Naive thymus-derived CD4-positive, alpha-beta T cell (primary cell): ENCODE measurements at regions of chr5 and their contacts with region 1.

Region 1: DNA sequence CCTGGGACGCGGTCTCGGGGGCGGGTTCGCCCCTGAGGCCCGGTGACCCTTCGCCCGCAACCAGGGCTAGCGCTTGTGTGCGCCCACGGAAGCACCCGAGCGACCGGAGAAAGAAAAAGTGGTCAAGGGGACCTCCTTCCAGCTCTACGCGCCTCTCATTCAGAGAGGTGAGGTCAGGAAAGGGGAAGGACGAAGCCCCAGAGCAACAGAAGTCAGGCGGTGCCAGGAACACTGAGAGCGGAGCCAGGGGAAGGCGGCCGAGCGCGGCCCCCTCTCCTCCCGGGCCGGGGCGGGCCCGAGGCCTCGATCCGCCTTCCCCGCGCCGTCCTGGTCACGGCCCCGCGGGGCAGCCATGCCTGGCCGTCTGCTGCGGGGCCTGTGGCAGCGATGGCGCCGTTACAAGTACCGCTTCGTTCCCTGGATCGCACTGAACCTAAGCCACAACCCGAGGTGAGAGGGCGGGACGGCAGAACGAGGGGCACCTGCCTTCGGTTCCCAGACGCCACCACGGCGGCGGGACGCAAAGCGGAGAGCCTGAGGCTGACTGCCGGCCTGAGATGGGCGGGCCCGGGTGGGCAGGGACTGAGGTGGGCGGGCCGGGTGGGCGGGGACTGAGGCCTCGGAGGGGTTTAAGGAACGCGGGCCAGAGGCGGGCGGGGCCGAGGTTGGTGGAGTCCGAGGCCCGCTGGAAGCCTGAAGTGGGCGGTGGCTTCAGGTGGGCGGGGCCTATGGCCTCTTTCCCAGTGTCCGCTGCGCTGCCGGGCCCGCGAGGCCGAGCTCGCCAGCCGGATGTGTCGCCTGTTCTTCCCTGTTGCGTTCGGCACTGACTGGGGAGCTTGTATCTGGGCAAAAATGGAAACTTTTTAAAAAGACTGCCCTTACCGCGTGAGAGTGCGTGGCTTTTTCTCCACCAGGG is at the start of gene SETD9:
- DNase-seq: peak; percentile 67 to 94 (median 73)
- ATAC-seq: peak; percentile 90
- H3K4me3 ChIP-seq: peak within 1 kb of the TSS; percentile 75
- H3K4me3 Mint-ChIP-seq: peak within 1 kb of the TSS; percentile 88 to 100 (median 91)
- H3K27ac ChIP-seq: peak within 1 kb of the TSS; percentile 79
- H3K27ac Mint-ChIP-seq: peak within 1 kb of the TSS; percentile 81 to 97 (median 89)
- H3K4me1 ChIP-seq: no peaks in the 10 kb centered on the region
- H3K4me1 Mint-ChIP-seq: peaks cover 12 to 24% (median 21%) of the 10 kb centered on the region in 7 donors
- H3K27me3 ChIP-seq: no peaks in the 10 kb centered on the region
- H3K27me3 Mint-ChIP-seq: peaks cover 0 to 15% (median 0%) of the 10 kb centered on the region in 5 donors
- total RNA-seq, gene SETD9: 3.7 to 9.7 (median 6.6) TPM

Region 2: GRCh38 chr5:55307383-55308253 is 1601.9 kb before region 1 on chr5 and contains the starts of genes DHX29 and MTREX:
- CTCF ChIA-PET with region 1: no interaction called
- POLR2A ChIA-PET with region 1: no interaction called
- intact Hi-C with region 1: loop called in 1 of 2 experiments (anchors 1 kb)
- DNase-seq: peak; percentile 85 to 93 (median 91)
- ATAC-seq: peak; percentile 94
- H3K4me3 ChIP-seq: peak within 1 kb of the TSS; percentile 97
- H3K4me3 Mint-ChIP-seq: no peak within 1 kb of the TSS
- H3K27ac ChIP-seq: peak within 1 kb of the TSS; percentile 89
- H3K27ac Mint-ChIP-seq: no peak within 1 kb of the TSS
- H3K4me1 ChIP-seq: peaks cover 28 to 33% of the 10 kb centered on the region in 2 donors
- H3K4me1 Mint-ChIP-seq: peaks cover 15 to 34% (median 21%) of the 10 kb centered on the region in 7 donors
- H3K27me3 ChIP-seq: no peaks in the 10 kb centered on the region
- H3K27me3 Mint-ChIP-seq: no peaks in the 10 kb centered on the region
- total RNA-seq, gene DHX29: 12.5 to 19.2 (median 15.9) TPM
- total RNA-seq, gene MTREX: 64.0 to 83.7 (median 66.3) TPM

Region 3: GRCh38 chr5:56951946-56952691 is 42.6 kb after region 1 on chr5 and contains the start of gene MIER3:
- CTCF ChIA-PET with region 1: no interaction called
- POLR2A ChIA-PET with region 1: interaction called, 5 read pairs
- intact Hi-C with region 1: loop called (anchors 1 kb)
- DNase-seq: peak; percentile 66 to 87 (median 80)
- ATAC-seq: peak; percentile 94
- H3K4me3 ChIP-seq: peak within 1 kb of the TSS; percentile 75
- H3K4me3 Mint-ChIP-seq: peak within 1 kb of the TSS; percentile 89 to 98 (median 96)
- H3K27ac ChIP-seq: peak within 1 kb of the TSS; percentile 73
- H3K27ac Mint-ChIP-seq: peak within 1 kb of the TSS in 8 of 9 donors; percentile 84 to 95 (median 88)
- H3K4me1 ChIP-seq: peaks cover 6 to 10% of the 10 kb centered on the region in 2 donors
- H3K4me1 Mint-ChIP-seq: peaks cover 18 to 32% (median 22%) of the 10 kb centered on the region in 7 donors
- H3K27me3 ChIP-seq: peaks cover 0 to 5% of the 10 kb centered on the region in 2 donors
- H3K27me3 Mint-ChIP-seq: peaks cover 10 to 45% (median 24%) of the 10 kb centered on the region in 5 donors
- total RNA-seq, gene MIER3: 14.9 to 35.0 (median 26.2) TPM

Region 4: GRCh38 chr5:57137401-57137800 is 227.8 kb after region 1 on chr5:
- CTCF ChIA-PET with region 1: no interaction called
- POLR2A ChIA-PET with region 1: interaction called, 3 read pairs
- intact Hi-C with region 1: loop called (anchors 2 kb)
- DNase-seq: no peak
- ATAC-seq: no peak
- H3K4me3 ChIP-seq: no peak overlapping the region
- H3K4me3 Mint-ChIP-seq: no peak overlapping the region
- H3K27ac ChIP-seq: no peak overlapping the region
- H3K27ac Mint-ChIP-seq: peak overlapping the region in 1 of 9 donors; percentile 4
- H3K4me1 ChIP-seq: no peaks in the 10 kb centered on the region
- H3K4me1 Mint-ChIP-seq: no peaks in the 10 kb centered on the region
- H3K27me3 ChIP-seq: no peaks in the 10 kb centered on the region
- H3K27me3 Mint-ChIP-seq: peaks cover 0 to 41% (median 0%) of the 10 kb centered on the region in 5 donors

Region 5: GRCh38 chr5:57779383-57780223 is 870.1 kb after region 1 on chr5:
- CTCF ChIA-PET with region 1: no interaction called
- POLR2A ChIA-PET with region 1: no interaction called
- intact Hi-C with region 1: loop called in 1 of 2 experiments (anchors 10 kb)
- DNase-seq: peak in 5 of 9 donors; percentile 8 to 26 (median 18)
- ATAC-seq: peak; percentile 58
- H3K4me3 ChIP-seq: no peak overlapping the region
- H3K4me3 Mint-ChIP-seq: no peak overlapping the region
- H3K27ac ChIP-seq: no peak overlapping the region
- H3K27ac Mint-ChIP-seq: no peak overlapping the region
- H3K4me1 ChIP-seq: no peaks in the 10 kb centered on the region
- H3K4me1 Mint-ChIP-seq: no peaks in the 10 kb centered on the region
- H3K27me3 ChIP-seq: no peaks in the 10 kb centered on the region
- H3K27me3 Mint-ChIP-seq: peaks cover 0 to 4% (median 0%) of the 10 kb centered on the region in 5 donors